ENCODE measurements at regions of chr4 and their contacts with region 1.

Region 1: DNA sequence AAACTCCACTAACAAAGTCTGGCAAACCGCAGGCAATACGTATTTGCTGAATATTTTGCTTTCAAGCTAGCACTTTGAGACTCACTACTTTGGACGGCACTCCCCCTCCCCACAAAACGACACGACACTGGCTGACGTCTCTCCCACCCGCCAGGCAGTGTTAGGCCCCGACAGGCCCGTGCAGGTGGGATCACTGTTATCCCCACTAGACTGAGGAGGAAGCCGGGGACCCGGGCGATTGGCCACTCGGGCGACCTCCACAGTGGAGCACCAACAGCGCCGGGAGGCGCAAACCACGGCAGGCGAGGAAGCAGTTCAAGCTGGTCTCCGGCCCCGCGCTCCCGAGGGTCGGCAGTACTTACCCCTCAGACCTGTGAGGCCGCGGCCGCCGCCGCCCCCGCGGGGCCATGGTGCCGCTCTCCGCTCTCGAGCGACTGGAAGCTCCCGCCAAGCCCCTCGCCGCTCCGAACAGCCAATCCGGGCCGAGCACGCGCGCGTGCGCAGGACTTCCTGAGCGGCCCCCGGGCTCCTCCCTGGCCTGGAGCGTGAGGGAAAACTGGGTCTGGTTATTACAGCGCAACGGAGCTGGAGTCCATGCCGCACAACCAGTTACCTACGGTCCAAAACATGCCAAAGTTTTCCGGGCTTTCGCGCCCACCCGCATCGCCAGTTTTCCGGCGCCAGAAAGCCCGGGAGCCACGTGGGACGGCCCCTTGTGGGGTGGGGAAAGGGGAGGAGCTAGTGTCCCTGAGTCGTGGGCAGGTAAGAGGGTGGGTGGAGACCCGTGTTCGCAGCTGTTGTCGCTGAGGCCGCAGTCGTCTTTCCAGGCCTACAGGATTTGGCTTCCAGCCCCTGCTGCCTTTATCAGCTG is at the start of gene CENPU:
- DNase-seq: peak; percentile 99
- H3K4me3 Mint-ChIP-seq: peak within 1 kb of the TSS; percentile 96
- H3K27ac Mint-ChIP-seq: peak within 1 kb of the TSS; percentile 93
- H3K4me1 Mint-ChIP-seq: peaks cover 41% of the 10 kb centered on the region
- H3K27me3 Mint-ChIP-seq: no peaks in the 10 kb centered on the region
- total RNA-seq, gene CENPU: 71.7 and 75.5 TPM in 2 replicates

Region 2: DNA sequence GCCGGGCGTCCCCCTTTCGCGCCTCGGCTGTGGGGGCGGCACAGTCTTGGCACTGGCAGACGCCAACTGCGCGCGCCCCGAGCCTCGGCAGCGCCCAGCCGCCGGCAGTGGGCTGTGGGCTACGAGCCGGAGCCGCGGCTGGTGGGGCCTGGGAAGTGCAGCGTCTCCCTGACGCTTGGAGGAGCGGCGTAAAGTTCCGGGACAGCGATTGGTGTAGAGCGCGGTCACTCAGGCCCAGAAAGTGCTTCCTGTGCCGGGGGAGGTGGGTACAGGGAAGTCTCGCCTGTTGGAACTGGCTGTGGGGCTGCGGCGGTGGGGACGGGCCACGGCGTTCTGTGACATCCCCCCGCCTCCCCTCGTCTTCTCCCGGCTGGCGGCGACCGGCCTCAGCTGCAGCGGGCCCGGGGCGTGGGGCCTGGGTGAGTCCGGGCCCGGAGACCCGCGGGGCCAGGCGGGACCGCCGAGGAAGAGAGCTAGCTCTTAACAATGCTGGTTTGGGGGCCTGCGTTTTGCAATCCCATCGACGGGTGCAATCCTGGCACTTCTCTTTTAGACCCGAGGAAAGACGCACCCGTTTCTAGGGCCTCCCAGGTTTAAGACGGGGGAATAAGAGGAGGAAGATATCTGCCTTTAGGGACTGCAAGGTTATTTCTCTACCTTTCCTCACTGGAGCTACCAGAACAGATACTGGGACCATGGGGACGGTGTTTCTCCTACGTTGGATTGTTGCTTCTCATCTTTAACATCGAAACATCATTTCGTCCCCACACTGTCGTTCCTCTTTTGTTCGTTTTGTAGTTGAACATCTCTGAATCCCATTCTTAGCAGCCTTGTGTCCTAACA is 1074.6 kb before region 1 on chr4 and contains the starts of genes RWDD4 and TRAPPC11:
- intact Hi-C with region 1: loop called (anchors 5 kb)
- DNase-seq: peak; percentile 98
- H3K4me3 Mint-ChIP-seq: peak within 1 kb of the TSS; percentile 82
- H3K27ac Mint-ChIP-seq: peak within 1 kb of the TSS; percentile 96
- H3K4me1 Mint-ChIP-seq: peaks cover 30% of the 10 kb centered on the region
- H3K27me3 Mint-ChIP-seq: no peaks in the 10 kb centered on the region
- total RNA-seq, gene RWDD4: 27.3 and 31.5 TPM in 2 replicates
- total RNA-seq, gene TRAPPC11: 26.3 and 33.4 TPM in 2 replicates

Region 3: GRCh38 chr4:184575306-184575705 is 158.6 kb before region 1 on chr4:
- intact Hi-C with region 1: loop called (anchors 2 kb)
- DNase-seq: no peak
- H3K4me3 Mint-ChIP-seq: no peak overlapping the region
- H3K27ac Mint-ChIP-seq: peak overlapping the region; percentile 77
- H3K4me1 Mint-ChIP-seq: peaks cover 14% of the 10 kb centered on the region
- H3K27me3 Mint-ChIP-seq: no peaks in the 10 kb centered on the region

Region 4: DNA sequence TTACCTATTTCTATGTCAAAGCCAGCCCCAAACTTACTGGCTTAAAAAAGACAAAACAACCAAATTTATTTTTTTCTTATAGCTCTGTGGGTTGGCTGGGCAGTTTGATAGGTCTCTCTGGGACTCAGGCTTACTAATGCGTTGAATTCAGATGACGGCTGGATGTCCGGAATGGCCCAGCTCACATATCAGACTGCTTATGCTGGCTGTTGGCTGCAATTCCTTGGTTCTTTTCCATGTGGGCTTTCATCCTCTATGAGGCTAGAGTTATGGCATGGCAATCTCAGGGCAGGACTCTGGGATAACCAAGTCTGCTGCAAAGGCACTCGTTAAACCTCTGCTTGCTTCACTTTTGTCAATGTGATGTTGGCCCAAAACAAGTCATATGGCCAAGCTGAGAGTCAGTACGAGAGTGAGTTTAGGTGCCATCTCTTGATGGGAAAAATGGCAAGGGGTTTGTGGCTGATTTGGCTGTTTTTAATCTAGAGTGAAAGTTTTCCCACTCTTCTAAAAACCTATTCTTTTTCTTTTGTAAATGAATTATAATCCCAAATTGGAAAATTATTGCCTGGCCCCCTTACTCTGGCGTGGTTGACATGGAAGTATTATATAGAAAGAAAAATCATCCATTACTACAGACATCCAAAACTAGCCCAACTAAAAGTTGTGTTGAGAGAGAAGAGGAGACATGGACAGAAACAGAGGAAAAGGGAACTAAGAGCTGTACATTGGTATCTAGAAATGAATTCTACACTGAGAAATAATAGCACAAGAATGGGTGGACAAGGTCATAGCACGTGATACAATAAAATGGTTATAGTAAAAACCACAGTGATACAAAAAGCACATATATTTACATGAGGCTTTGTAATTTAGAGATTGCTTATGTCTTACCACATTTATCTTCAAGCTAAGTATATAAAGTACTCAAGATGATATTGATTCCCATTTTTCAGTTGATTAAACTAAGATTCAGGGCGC is 77.7 kb before region 1 on chr4:
- intact Hi-C with region 1: no loop called
- DNase-seq: no peak
- H3K4me3 Mint-ChIP-seq: no peak overlapping the region
- H3K27ac Mint-ChIP-seq: no peak overlapping the region
- H3K4me1 Mint-ChIP-seq: peaks cover 9% of the 10 kb centered on the region
- H3K27me3 Mint-ChIP-seq: no peaks in the 10 kb centered on the region

Region 5: GRCh38 chr4:184762100-184762499 is 28.2 kb after region 1 on chr4:
- intact Hi-C with region 1: loop called (anchors 1 kb)
- DNase-seq: peak; percentile 90
- H3K4me3 Mint-ChIP-seq: peak overlapping the region; percentile 71
- H3K27ac Mint-ChIP-seq: peak overlapping the region; percentile 93
- H3K4me1 Mint-ChIP-seq: peaks cover 19% of the 10 kb centered on the region
- H3K27me3 Mint-ChIP-seq: no peaks in the 10 kb centered on the region

Region 6: GRCh38 chr4:184833046-184833818 is 99.3 kb after region 1 on chr4:
- intact Hi-C with region 1: no loop called
- DNase-seq: no peak
- H3K4me3 Mint-ChIP-seq: no peak overlapping the region
- H3K27ac Mint-ChIP-seq: no peak overlapping the region
- H3K4me1 Mint-ChIP-seq: peaks cover 7% of the 10 kb centered on the region
- H3K27me3 Mint-ChIP-seq: peaks cover 8% of the 10 kb centered on the region

Region 7: GRCh38 chr4:185203486-185204237 is 469.8 kb after region 1 on chr4 and contains the start of gene CFAP97:
- intact Hi-C with region 1: loop called (anchors 5 kb)
- DNase-seq: peak; percentile 95
- H3K4me3 Mint-ChIP-seq: peak within 1 kb of the TSS; percentile 97
- H3K27ac Mint-ChIP-seq: peak within 1 kb of the TSS; percentile 99
- H3K4me1 Mint-ChIP-seq: peaks cover 36% of the 10 kb centered on the region
- H3K27me3 Mint-ChIP-seq: no peaks in the 10 kb centered on the region
- total RNA-seq, gene CFAP97: 56.6 and 59.3 TPM in 2 replicates